ENCODE measurements at regions of chr3 and their contacts with region 1.

Region 1: GRCh38 chr3:8509961-8510360 is 8.3 kb downstream of the LMCD1 start:
- DNase-seq: peak in 1 of 2 donors; percentile 57
- ATAC-seq: peak; percentile 39
- H3K4me3 ChIP-seq: no peak overlapping the region
- H3K27ac ChIP-seq: peak overlapping the region; percentile 64 to 85
- H3K4me1 ChIP-seq: peaks cover 6 to 27% of the 10 kb centered on the region in 2 donors
- H3K27me3 ChIP-seq: no peaks in the 10 kb centered on the region

Region 2: GRCh38 chr3:8555113-8555661 is 45.2 kb after region 1 on chr3:
- intact Hi-C with region 1: loop called in 1 of 2 experiments (anchors 5 kb)
- DNase-seq: peak; percentile 72 to 76
- ATAC-seq: no peak
- H3K4me3 ChIP-seq: no peak overlapping the region
- H3K27ac ChIP-seq: peak overlapping the region; percentile 51 to 65
- H3K4me1 ChIP-seq: peaks cover 4 to 8% of the 10 kb centered on the region in 2 donors
- H3K27me3 ChIP-seq: no peaks in the 10 kb centered on the region

Region 3: GRCh38 chr3:8607234-8608040 is 97.5 kb after region 1 on chr3:
- intact Hi-C with region 1: loop called in 1 of 2 experiments (anchors 5 kb)
- DNase-seq: peak in 1 of 2 donors; percentile 79
- ATAC-seq: peak; percentile 93
- H3K4me3 ChIP-seq: no peak overlapping the region
- H3K27ac ChIP-seq: no peak overlapping the region
- H3K4me1 ChIP-seq: no peaks in the 10 kb centered on the region
- H3K27me3 ChIP-seq: no peaks in the 10 kb centered on the region

Region 4: DNA sequence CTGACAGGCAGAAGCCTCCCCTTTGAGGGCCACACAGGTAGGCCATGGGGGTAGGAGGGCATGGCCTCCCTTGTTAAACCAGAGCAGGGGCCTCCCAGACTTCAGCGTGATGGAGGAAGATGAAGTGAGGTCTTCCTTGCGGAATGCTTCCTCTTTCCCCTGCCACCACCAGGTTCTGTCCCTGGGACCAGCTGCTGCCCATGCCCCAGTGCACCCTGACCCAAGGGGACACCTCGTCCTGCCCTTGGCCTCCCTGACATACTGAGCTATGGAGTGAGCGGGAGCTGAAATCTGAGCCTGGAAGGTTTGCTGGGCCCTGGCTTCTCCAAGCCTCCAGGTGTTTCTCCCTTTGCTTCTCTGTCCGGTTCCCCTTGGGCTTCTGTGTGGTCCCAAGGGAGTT is 108.0 kb after region 1 on chr3:
- intact Hi-C with region 1: no loop called
- DNase-seq: no peak
- ATAC-seq: no peak
- H3K4me3 ChIP-seq: no peak overlapping the region
- H3K27ac ChIP-seq: no peak overlapping the region
- H3K4me1 ChIP-seq: no peaks in the 10 kb centered on the region
- H3K27me3 ChIP-seq: no peaks in the 10 kb centered on the region

Region 5: GRCh38 chr3:8822141-8822540 is 312.2 kb after region 1 on chr3:
- intact Hi-C with region 1: no loop called
- DNase-seq: no peak
- ATAC-seq: no peak
- H3K4me3 ChIP-seq: no peak overlapping the region
- H3K27ac ChIP-seq: no peak overlapping the region
- H3K4me1 ChIP-seq: no peaks in the 10 kb centered on the region
- H3K27me3 ChIP-seq: no peaks in the 10 kb centered on the region